Activated T-helper 1 cell treated with anti-CD3 and anti-CD28 coated beads, Interleukin-12 subunit alpha, Interleukin-12 subunit beta, Interleukin-2, Interleukin-4 antibody, amounts not matched to agents 30 ng/mL and 10 ng/mL and 1 ng/mL, durations not matched to agents 14 hours and 24 hours and 36 hours (primary cell): ENCODE measurements at regions of chr15 and their contacts with region 1.

Region 1: DNA sequence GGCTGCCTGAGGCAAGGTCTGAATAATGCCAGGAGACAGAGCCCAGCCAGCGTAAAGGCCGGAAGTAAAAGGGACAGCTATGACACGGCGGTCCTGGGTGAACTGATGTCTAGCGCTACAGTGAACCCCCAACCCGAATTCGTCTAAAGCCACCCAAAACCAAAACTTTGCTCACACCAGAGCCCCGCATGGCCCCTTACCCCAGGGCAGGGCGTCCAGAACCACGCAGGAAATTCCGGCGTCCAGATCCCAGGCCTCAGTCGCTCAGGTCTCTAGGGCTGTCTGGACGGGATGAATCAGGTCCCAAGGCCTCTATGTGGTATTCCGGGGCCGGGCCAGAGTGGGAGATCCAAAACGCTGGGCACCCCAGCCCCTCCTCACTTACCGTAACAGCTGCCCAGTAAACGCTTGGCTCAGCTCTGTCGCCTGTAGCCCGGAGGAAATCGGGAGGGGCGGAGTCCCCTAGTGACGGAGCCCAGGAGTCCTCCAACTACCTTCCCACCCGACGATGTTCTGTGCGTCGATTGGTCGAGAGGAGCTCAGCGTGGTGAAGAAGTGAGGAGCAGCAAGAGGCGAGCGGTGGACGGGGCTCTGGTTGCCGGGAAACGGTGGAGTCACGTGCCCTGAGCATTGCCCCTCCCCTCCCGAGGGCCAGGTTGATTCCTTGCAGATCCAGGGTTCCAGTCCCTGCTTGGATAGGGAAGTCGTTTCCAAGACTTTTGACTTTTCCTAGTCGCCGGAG is at the start of gene CCDC32:
- DNase-seq: peak; percentile 96
- H3K4me3 Mint-ChIP-seq: peak within 1 kb of the TSS; percentile 96
- H3K27ac Mint-ChIP-seq: peak within 1 kb of the TSS; percentile 96
- H3K4me1 Mint-ChIP-seq: peaks cover 43% of the 10 kb centered on the region
- H3K27me3 Mint-ChIP-seq: no peaks in the 10 kb centered on the region
- total RNA-seq, gene CCDC32: 28.4 and 36.9 TPM in 2 replicates

Region 2: DNA sequence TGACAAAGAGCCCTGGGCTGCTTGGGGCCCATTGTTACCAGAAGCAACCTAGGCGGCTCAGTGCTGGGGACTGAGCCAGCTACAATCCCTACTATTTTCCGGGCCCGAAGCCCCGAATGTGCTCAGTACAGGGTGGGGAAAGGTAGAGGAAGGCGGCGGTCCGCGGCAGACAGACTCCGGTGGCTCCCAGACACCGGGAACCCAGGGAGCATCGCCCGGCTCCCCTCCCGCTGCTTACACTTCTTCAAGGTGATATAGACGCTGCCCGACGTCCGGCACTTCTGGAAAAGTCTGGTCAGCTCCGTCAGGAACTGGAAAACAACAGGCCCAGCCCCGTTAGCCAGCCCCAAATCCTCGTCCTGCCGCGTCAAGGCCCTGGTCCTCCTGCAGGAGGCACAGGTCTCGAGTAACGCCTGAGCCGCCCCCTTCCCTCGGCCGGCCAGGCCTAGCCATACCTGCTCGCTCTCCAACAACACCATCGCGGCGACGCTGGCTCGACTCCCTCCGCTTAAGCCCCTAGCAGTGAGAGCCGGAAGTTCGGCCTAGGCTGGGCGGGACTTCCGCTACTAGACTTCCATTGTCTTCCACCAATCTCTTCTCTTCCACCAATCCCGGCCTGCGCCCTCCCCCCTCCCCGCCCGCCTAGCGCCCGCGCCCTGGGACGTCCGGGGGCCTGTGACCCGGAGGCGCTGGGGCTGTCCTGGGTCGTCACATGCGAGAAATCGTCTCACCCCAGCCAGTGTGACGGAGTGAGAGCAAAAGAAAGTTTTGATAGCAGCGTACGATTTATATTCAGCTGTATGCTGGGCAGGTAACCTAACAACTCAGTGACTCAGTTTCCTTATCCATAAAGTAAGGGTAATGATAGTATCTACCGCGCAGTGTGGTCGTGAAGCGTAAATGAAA is 525.9 kb before region 1 on chr15 and contains the start of gene SRP14:
- intact Hi-C with region 1: loop called (anchors 10 kb)
- DNase-seq: peak; percentile 88
- H3K4me3 Mint-ChIP-seq: peak within 1 kb of the TSS; percentile 100
- H3K27ac Mint-ChIP-seq: peak within 1 kb of the TSS; percentile 98
- H3K4me1 Mint-ChIP-seq: peaks cover 44% of the 10 kb centered on the region
- H3K27me3 Mint-ChIP-seq: no peaks in the 10 kb centered on the region
- total RNA-seq, gene SRP14: 144 and 147 TPM in 2 replicates

Region 3: GRCh38 chr15:40593588-40594428 is 29.0 kb after region 1 on chr15 and contains the start of gene KNL1:
- intact Hi-C with region 1: loop called (anchors 1 kb)
- DNase-seq: peak; percentile 88
- H3K4me3 Mint-ChIP-seq: peak within 1 kb of the TSS; percentile 93
- H3K27ac Mint-ChIP-seq: peak within 1 kb of the TSS; percentile 98
- H3K4me1 Mint-ChIP-seq: peaks cover 45% of the 10 kb centered on the region
- H3K27me3 Mint-ChIP-seq: peaks cover 2% of the 10 kb centered on the region
- total RNA-seq, gene KNL1: 21.6 and 22.4 TPM in 2 replicates

Region 4: GRCh38 chr15:40722934-40723333 is 158.2 kb after region 1 on chr15:
- intact Hi-C with region 1: no loop called
- DNase-seq: no peak
- H3K4me3 Mint-ChIP-seq: no peak overlapping the region
- H3K27ac Mint-ChIP-seq: no peak overlapping the region
- H3K4me1 Mint-ChIP-seq: peaks cover 24% of the 10 kb centered on the region
- H3K27me3 Mint-ChIP-seq: no peaks in the 10 kb centered on the region

Region 5: DNA sequence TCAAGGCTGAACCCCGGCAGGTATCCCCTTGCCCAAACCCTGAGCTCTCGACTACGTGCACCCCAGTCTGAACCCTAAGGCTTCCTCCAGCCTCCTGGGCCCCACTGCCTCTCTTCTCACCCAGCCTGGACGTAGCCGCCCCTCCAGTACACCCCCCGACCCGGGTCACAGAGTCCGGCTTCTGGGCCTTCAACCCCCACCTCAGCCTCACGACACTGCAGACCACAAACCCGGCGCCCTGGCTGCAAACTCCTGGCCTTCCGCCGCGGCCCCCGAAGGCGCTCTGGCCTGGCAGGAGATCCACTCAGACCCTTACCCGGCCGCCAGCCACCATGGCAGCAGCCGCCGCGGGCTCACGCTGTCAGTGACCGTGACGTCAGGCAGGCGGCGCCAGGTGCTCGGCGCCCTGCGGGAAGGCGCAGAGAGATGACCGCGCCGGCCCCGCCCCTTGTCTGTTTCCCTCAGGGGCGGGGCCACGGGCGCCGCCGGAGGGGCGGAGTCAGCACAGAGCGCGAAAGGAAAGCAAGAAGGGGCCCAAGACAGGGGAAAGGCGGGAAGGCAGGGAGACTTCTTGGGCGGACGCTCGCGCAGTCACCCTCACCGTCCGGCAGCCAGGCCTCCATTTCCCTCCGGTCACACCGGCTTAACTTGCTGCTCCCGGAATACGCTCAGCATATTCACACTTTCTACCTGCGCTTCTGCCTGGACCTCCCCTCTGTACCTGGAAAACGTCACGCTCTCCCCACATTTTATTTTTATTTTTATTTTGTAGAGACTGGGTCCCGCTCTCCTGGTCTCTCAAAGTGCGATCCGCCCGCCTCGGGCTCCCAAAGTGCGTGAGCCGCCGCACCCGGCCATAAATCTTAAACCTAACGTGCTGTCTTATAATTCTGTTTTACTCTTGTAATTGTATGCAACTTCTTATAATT is 190.4 kb after region 1 on chr15 and contains the start of gene RMDN3:
- intact Hi-C with region 1: loop called (anchors 2 kb)
- DNase-seq: peak; percentile 94
- H3K4me3 Mint-ChIP-seq: peak within 1 kb of the TSS; percentile 91
- H3K27ac Mint-ChIP-seq: peak within 1 kb of the TSS; percentile 97
- H3K4me1 Mint-ChIP-seq: peaks cover 38% of the 10 kb centered on the region
- H3K27me3 Mint-ChIP-seq: no peaks in the 10 kb centered on the region
- total RNA-seq, gene RMDN3: 39.0 and 42.2 TPM in 2 replicates

Region 6: DNA sequence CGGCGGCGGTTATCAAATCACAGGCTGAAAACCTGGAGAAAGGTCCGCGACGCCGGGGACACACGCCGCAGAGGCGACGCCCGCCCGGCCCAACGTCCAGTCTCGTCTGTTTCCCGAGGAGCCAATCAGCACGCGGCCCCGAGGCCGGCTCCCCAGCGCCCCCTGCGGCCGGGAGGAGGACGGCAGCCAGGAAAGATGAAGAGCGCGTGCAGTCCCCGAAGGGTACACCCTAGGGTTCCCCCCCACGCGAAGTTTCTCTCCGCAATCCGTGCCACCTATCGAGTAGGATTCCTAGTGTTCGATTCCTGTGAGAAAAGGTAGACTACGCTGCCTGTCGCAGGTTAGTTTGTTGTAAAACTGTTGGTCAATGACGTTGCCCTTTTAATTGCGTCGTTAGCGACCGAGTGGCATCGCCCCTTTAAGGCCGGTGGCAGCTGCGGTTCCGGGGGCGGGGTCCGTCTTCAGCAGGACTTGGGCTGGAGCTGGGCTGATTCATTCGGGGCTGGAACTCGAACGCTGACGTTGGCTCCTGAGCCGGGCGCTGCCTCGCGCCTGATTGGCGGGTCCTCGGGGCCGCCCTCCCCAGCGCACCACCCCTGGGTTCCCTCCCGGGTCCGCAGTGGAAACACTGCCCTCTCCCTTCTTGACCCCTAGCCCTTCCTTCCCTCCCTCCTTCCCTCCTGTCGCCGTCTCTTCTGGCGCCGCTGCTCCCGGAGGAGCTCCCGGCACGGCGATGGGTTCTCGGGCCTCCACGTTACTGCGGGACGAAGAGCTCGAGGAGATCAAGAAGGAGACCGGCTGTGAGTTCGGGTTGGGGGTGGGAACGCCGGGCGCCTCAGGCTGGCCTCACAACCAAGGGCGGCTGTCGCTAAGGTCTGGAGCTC is 666.1 kb after region 1 on chr15 and contains the starts of genes CHP1 and EXD1:
- intact Hi-C with region 1: loop called (anchors 5 kb)
- DNase-seq: peak; percentile 96
- H3K4me3 Mint-ChIP-seq: peak within 1 kb of the TSS; percentile 92
- H3K27ac Mint-ChIP-seq: peak within 1 kb of the TSS; percentile 89
- H3K4me1 Mint-ChIP-seq: peaks cover 23% of the 10 kb centered on the region
- H3K27me3 Mint-ChIP-seq: no peaks in the 10 kb centered on the region
- total RNA-seq, gene CHP1: 43.5 and 55.2 TPM in 2 replicates
- total RNA-seq, gene EXD1: not detected in 2 replicates